BJ (cell line): ENCODE measurements at regions of chr1 and their contacts with region 1.

Region 1: DNA sequence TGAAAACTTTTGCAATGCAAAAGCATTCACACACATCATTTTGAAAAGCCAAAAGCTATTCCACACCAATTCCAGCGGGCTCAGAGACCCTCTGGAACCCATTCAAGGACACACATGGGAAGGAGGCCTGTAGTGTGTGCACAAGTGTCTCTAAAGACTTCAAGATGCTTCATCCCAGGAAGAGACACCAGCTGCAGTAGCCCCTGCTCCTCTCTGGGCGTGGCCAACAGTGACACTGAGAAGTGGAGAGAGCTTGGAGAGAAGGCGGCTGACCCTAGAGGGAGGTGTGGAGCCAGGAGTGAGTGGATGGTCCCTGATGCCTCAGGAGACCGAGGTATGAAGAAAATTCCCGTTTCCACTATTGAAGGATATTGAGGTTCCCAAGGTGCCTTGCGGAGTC is 14.9 kb upstream of the TNNI1 start:
- DNase-seq: no peak
- H3K4me3 ChIP-seq: no peak overlapping the region
- H3K27me3 ChIP-seq: no peaks in the 10 kb centered on the region
- CTCF ChIP-seq: peak; percentile 55

Region 2: GRCh38 chr1:201447911-201448871 is 11.8 kb after region 1 on chr1:
- CTCF ChIA-PET with region 1: interaction called, 83 read pairs
- POLR2A ChIA-PET with region 1: no interaction called
- DNase-seq: no peak
- H3K4me3 ChIP-seq: no peak overlapping the region
- H3K27me3 ChIP-seq: peaks cover 1% of the 10 kb centered on the region; the same call in 1 of the 2 replicates
- CTCF ChIP-seq: peak; percentile 88

Region 3: GRCh38 chr1:201468844-201469511 is 32.6 kb after region 1 on chr1 and contains the start of gene PHLDA3:
- CTCF ChIA-PET with region 1: interaction called, 30 read pairs
- POLR2A ChIA-PET with region 1: no interaction called
- DNase-seq: peak; percentile 70
- H3K4me3 ChIP-seq: peak within 1 kb of the TSS; percentile 67
- H3K27me3 ChIP-seq: no peaks in the 10 kb centered on the region
- CTCF ChIP-seq: 0 out of 2 replicates have a peak, but pooled peaks have one; percentile 3
- polyA plus RNA-seq, gene PHLDA3: 87.3 and 130 TPM in 2 replicates

Region 4: GRCh38 chr1:201488817-201489589 is 52.6 kb after region 1 on chr1:
- CTCF ChIA-PET with region 1: interaction called, 27 read pairs
- POLR2A ChIA-PET with region 1: no interaction called
- DNase-seq: peak; percentile 89
- H3K4me3 ChIP-seq: no peak overlapping the region
- H3K27me3 ChIP-seq: no peaks in the 10 kb centered on the region
- CTCF ChIP-seq: no peak

Region 5: DNA sequence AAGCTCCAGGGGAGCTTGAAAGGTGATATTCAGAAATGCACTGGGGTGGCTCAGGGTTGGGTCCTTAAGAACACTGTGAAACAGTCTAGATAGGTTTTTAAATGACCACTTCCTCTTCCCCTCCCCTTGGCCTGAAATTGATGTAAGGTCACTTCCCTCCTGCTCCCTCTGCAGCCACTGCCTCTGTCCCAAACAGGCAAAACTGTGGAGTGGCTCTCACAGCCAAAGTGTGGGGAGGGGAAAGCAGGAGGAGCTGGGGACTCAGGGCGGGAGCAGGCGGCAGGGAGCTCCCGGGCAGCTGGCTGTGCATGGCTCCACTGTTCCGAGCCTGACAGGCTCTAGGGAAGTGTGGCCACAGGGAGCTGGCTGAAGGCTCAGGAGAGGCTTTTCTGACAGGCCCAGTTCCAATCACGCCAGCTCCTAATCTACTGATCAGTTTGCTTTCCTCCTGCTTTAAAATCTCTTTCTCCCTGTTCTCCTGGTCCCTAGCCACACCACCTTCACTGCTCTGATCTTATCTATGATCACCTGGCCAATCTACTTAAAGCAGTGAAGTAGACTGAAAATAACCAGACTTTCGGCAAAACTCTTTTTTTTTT is 75.6 kb after region 1 on chr1:
- CTCF ChIA-PET with region 1: interaction called, 129 read pairs
- POLR2A ChIA-PET with region 1: no interaction called
- DNase-seq: no peak
- H3K4me3 ChIP-seq: no peak overlapping the region
- H3K27me3 ChIP-seq: no peaks in the 10 kb centered on the region
- CTCF ChIP-seq: no peak